Activated T-helper 1 cell treated with anti-CD3 and anti-CD28 coated beads, Interleukin-12 subunit alpha, Interleukin-12 subunit beta, Interleukin-2, Interleukin-4 antibody, amounts not matched to agents 30 ng/mL and 10 ng/mL and 1 ng/mL, durations not matched to agents 14 hours and 24 hours and 36 hours (primary cell): ENCODE measurements at regions of chr7 and their contacts with region 1.

Region 1: GRCh38 chr7:74289018-74289658 is at the start of gene CLIP2:
- DNase-seq: peak; percentile 56
- H3K4me3 Mint-ChIP-seq: peak within 1 kb of the TSS; percentile 83
- H3K27ac Mint-ChIP-seq: peak within 1 kb of the TSS; percentile 82
- H3K4me1 Mint-ChIP-seq: peaks cover 25% of the 10 kb centered on the region
- H3K27me3 Mint-ChIP-seq: peaks cover 33% of the 10 kb centered on the region
- total RNA-seq, gene CLIP2: 1.5 and 1.7 TPM in 2 replicates

Region 2: DNA sequence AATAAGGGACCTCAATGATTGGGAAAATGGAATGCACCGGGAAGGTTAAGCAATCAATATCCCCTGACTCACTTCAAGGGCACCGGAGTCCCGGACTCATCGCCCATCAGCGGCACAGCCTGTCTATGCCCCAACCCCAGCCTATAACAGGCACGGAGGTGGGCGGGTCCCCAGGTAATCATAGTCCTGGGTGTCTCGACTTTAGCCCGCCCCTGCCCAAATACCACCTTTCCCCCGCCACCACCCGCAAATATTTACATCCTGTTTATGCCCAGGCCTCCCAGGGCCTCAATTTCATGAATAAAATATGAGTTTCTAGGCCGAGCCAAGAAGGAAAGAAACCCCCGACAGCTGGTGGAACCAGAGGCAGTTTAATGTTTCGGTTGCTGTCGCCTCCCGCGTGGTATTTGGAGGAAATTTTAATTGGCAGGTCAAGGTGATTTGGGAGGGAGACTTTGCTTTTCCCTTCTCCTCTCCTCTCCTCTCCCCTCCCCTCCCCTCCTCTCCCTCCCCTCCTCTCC is 19.3 kb before region 1 on chr7:
- intact Hi-C with region 1: loop called (anchors 1 kb)
- DNase-seq: peak; percentile 42
- H3K4me3 Mint-ChIP-seq: peak overlapping the region; percentile 79
- H3K27ac Mint-ChIP-seq: no peak overlapping the region
- H3K4me1 Mint-ChIP-seq: peaks cover 12% of the 10 kb centered on the region
- H3K27me3 Mint-ChIP-seq: peaks cover 19% of the 10 kb centered on the region

Region 3: GRCh38 chr7:74306730-74307469 is 17.8 kb after region 1 on chr7:
- intact Hi-C with region 1: no loop called
- DNase-seq: no peak
- H3K4me3 Mint-ChIP-seq: no peak overlapping the region
- H3K27ac Mint-ChIP-seq: no peak overlapping the region
- H3K4me1 Mint-ChIP-seq: peaks cover 17% of the 10 kb centered on the region
- H3K27me3 Mint-ChIP-seq: peaks cover 10% of the 10 kb centered on the region

Region 4: GRCh38 chr7:74334030-74334429 is 44.9 kb after region 1 on chr7:
- intact Hi-C with region 1: no loop called
- DNase-seq: no peak
- H3K4me3 Mint-ChIP-seq: no peak overlapping the region
- H3K27ac Mint-ChIP-seq: no peak overlapping the region
- H3K4me1 Mint-ChIP-seq: no peaks in the 10 kb centered on the region
- H3K27me3 Mint-ChIP-seq: peaks cover 2% of the 10 kb centered on the region